Calu3 (cell line): ENCODE measurements at regions of chr1 and their contacts with region 1.

Region 1: DNA sequence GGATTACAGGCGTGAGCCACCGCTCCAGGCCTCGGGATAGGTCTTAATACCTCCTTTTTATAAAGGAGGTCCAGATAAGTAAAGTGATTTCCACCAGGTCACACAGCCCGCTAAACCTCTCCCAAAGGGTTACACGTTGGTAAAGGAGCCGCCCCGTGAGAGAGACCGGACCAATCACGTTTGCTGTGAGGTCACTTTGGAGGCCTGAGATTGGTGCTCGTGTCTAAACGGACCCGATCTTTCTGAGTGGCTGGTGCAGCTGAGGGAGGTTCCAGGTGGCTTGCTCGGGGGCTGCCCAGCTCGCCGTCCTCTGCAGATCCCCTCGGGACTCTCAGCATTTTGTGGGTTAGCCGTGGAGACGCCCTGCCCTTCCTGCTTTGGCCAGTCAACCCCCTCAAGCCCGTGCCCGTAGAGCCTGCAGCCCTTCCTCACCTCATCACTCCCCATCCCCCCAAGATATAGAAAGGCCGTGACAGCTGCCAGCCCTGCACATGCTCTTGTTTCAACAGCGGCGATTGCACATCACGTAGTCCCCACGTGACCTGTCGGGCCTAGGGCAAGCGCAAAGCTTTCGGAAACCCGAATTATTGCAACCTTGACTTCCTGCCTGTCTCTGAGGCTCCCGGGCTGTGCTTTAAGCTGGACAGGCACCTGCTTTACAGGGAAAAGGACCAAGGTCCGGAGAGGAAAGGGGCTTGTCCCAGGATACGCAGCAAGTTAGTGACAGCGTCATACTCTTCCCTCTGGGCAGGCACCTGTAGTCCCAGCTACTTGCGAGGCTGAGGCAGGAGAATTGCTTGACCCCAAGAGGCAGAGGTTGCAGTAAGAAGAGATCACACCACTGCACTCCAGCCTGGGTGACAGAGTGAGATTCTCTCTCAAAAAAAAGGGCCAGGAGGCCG is 5.0 kb upstream of the COA7 start:
- DNase-seq: peak; percentile 87
- H3K4me3 Mint-ChIP-seq: peak overlapping the region; percentile 98
- H3K27ac Mint-ChIP-seq: peak overlapping the region; percentile 96
- H3K4me1 Mint-ChIP-seq: peaks cover 38% of the 10 kb centered on the region
- H3K27me3 Mint-ChIP-seq: no peaks in the 10 kb centered on the region
- CTCF ChIP-seq: no peak

Region 2: DNA sequence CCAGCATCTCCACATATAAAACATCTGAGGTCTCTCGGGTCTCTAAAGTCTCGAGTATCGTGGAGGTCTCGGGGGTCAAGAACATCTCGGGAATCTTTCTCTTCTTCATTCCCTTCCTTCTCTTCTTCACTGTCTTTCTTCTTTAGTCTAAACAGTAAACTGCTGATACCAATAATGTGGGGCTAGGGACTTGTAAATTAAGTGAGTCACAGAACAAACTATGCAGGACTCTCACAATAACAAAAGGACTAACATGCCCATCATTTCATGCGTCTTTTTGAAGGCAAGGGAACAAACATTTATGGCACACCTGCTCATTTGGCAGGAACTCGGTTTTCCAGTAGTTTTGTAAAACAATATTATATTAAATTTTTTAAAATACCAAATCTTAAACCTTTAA is 266.3 kb before region 1 on chr1:
- CTCF ChIA-PET with region 1: no interaction called
- intact Hi-C with region 1: no loop called
- DNase-seq: no peak
- H3K4me3 Mint-ChIP-seq: no peak overlapping the region
- H3K27ac Mint-ChIP-seq: no peak overlapping the region
- H3K4me1 Mint-ChIP-seq: no peaks in the 10 kb centered on the region
- H3K27me3 Mint-ChIP-seq: no peaks in the 10 kb centered on the region
- CTCF ChIP-seq: no peak

Region 3: DNA sequence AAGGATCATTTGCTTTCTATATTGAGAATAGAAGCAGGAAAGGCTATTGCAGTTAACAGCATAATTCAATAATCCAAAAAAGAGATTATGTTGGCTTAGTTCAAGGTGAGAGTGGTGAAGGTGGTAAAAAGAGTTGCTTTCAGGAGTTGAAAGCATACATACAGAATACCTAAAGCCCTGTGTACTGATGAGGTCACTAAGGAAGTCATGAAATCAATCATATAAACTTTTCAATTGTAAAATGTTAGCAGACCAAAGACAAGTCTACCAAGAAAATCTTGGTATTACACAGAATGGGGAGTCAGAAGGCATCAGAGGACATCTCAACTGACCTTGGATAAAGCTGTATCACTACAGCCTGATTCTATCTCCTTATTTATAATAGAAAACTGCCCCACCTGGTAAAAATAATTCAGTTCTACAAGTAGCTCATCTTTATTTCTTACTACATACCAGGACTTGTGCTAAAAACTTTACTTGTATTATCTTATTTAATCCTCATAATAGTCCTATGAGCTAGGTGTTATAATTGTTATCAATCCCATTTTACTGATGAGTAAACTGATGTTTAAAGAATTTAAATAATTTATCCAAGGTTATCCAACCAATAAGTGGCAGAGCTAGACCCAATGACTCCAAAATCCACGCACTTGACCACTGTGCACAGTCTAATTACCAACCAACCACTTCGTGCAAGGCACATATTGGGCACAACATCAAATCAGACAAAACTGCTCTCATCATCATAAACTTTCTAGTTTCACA is 191.1 kb before region 1 on chr1:
- CTCF ChIA-PET with region 1: no interaction called
- intact Hi-C with region 1: no loop called
- DNase-seq: no peak
- H3K4me3 Mint-ChIP-seq: no peak overlapping the region
- H3K27ac Mint-ChIP-seq: no peak overlapping the region
- H3K4me1 Mint-ChIP-seq: no peaks in the 10 kb centered on the region
- H3K27me3 Mint-ChIP-seq: no peaks in the 10 kb centered on the region
- CTCF ChIP-seq: no peak

Region 4: DNA sequence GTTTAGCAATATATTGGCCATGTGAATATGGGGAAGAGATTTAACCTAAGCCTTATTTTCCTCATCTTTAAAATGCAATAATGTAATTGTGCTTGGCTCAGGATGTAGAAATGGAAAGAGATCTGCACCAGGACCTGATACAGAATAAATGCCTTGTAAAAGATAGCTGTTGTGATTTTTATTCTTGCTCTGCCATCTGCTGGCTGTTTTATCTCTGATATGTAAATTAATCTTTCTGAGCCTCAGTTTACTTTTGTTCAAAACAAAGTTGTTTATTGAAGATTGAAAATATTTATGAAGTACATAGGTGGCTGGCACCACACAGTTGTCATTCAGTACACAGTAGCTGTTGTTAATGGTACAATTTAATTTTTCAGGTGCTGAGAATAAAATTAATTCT is 45.0 kb after region 1 on chr1:
- CTCF ChIA-PET with region 1: interaction called, 4 read pairs
- intact Hi-C with region 1: loop called (anchors 5 kb)
- DNase-seq: no peak
- H3K4me3 Mint-ChIP-seq: no peak overlapping the region
- H3K27ac Mint-ChIP-seq: no peak overlapping the region
- H3K4me1 Mint-ChIP-seq: peaks cover 25% of the 10 kb centered on the region
- H3K27me3 Mint-ChIP-seq: no peaks in the 10 kb centered on the region
- CTCF ChIP-seq: no peak

Region 5: DNA sequence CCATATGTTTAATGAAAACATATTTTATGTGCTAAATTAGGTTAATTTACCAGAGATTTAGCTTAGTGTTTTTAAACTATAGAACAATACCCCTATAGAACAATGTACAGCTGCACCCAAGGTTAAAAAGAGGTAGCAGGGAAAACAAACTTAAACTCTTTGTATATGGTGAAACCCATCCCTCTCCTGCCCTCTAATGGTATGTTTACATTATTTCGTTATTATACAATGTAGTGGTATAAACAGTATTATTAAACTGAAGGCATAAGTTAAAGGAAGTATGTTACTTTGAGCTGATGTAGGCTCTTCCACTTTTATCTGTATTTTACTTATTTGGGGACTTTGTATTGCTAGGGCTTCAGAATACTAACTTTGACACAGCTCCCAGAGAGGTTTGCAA is 122.7 kb after region 1 on chr1:
- CTCF ChIA-PET with region 1: interaction called, 7 read pairs
- intact Hi-C with region 1: loop called (anchors 5 kb)
- DNase-seq: no peak
- H3K4me3 Mint-ChIP-seq: no peak overlapping the region
- H3K27ac Mint-ChIP-seq: no peak overlapping the region
- H3K4me1 Mint-ChIP-seq: no peaks in the 10 kb centered on the region
- H3K27me3 Mint-ChIP-seq: no peaks in the 10 kb centered on the region
- CTCF ChIP-seq: peak; percentile 16

Region 6: GRCh38 chr1:52899445-52899894 is 196.3 kb after region 1 on chr1:
- CTCF ChIA-PET with region 1: no interaction called
- intact Hi-C with region 1: no loop called
- DNase-seq: no peak
- H3K4me3 Mint-ChIP-seq: no peak overlapping the region
- H3K27ac Mint-ChIP-seq: no peak overlapping the region
- H3K4me1 Mint-ChIP-seq: no peaks in the 10 kb centered on the region
- H3K27me3 Mint-ChIP-seq: no peaks in the 10 kb centered on the region
- CTCF ChIP-seq: no peak

Region 7: DNA sequence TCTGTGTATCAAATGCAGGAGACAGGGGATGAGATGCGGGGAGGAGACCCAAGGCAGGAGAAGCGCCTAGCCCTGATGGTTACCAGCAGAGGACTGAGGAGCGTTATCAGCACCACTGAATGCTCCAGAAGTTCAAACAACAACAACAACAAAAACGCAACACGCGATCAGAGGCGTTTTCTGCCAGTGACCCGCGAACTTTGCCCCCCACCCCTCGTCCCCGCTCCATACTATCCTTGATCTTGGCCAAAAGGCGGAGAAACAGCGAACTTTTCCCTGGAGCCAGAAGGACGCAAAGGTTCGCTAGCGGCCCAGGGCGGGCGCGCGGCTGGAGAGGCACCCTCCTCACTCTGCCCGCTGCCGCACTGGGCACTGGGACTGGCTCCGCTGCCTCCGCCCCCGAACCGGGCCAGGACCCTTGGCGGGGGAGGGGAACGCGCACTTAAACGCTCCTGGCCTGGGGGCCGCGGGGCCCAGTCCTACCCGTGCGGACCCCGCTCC is 217.7 kb after region 1 on chr1:
- CTCF ChIA-PET with region 1: interaction called, 4 read pairs
- intact Hi-C with region 1: loop called (anchors 2 kb)
- DNase-seq: peak; percentile 22
- H3K4me3 Mint-ChIP-seq: peak overlapping the region; percentile 94
- H3K27ac Mint-ChIP-seq: no peak overlapping the region
- H3K4me1 Mint-ChIP-seq: peaks cover 24% of the 10 kb centered on the region
- H3K27me3 Mint-ChIP-seq: no peaks in the 10 kb centered on the region
- CTCF ChIP-seq: no peak

Region 8: GRCh38 chr1:53196485-53197270 is 493.5 kb after region 1 on chr1 and contains the start of gene CPT2:
- CTCF ChIA-PET with region 1: no interaction called
- intact Hi-C with region 1: loop called (anchors 5 kb)
- DNase-seq: peak; percentile 93
- H3K4me3 Mint-ChIP-seq: peak within 1 kb of the TSS; percentile 87
- H3K27ac Mint-ChIP-seq: peak within 1 kb of the TSS; percentile 86
- H3K4me1 Mint-ChIP-seq: peaks cover 42% of the 10 kb centered on the region
- H3K27me3 Mint-ChIP-seq: no peaks in the 10 kb centered on the region
- CTCF ChIP-seq: no peak
- total RNA-seq, gene CPT2: 18.5 and 23.5 TPM in 2 replicates